ENCODE measurements at regions of chr9 and their contacts with region 1.

Region 1: GRCh38 chr9:121133149-121133816 is 58.5 kb downstream of the CNTRL start:
- DNase-seq: peak; percentile 77
- ATAC-seq: peak; percentile 99
- H3K4me3 ChIP-seq: peak overlapping the region in 1 of 3 experiments; percentile 36; a peak in 2 of 6 replicates
- H3K27ac ChIP-seq: peak overlapping the region; percentile 54
- H3K4me1 ChIP-seq: peaks cover 31% of the 10 kb centered on the region
- H3K27me3 ChIP-seq: no peaks in the 10 kb centered on the region
- CTCF ChIP-seq: no peak
- EP300 ChIP-seq: 0 out of 4 replicates have a peak, but pooled peaks of 1 of the 2 experiments have one; percentile 9
- POLR2A ChIP-seq: no peak
- RAD21 ChIP-seq: no peak

Region 2: DNA sequence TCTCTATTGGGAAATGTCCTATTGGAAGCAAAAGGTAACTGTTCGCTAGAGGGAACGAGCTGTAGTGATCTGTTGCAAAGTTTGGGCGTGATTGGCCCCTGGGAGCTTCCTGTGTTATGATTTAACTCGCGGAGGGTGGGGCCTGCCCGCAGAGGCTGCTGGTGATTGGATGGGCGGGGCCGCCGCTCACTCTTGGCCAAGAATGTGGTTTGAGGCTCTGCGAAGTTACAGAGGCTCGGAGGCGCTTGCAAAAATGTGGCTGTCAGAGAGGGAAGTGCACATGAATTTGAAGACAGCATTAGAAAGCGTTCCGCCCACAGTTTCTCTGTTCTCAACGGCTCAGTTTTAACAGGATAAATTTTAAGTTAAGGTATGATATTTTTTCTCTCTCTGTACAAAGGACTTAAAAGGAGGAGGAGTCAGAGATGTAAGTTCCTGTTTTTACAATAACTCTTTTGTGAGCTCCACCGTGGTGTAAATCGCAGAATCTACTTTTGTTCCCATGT is 11.6 kb before region 1 on chr9:
- CTCF ChIA-PET with region 1: no interaction called
- POLR2A ChIA-PET with region 1: interaction called, 26 read pairs
- in situ Hi-C with region 1: no loop called
- intact Hi-C with region 1: no loop called
- DNase-seq: peak; percentile 95
- ATAC-seq: peak; percentile 100
- H3K4me3 ChIP-seq: peak overlapping the region; percentile 50 to 70 (median 60)
- H3K27ac ChIP-seq: peak overlapping the region; percentile 62
- H3K4me1 ChIP-seq: peaks cover 11% of the 10 kb centered on the region
- H3K27me3 ChIP-seq: no peaks in the 10 kb centered on the region
- CTCF ChIP-seq: peak; percentile 19; the same call in 1 of the 2 replicates
- EP300 ChIP-seq: no peak; a peak in 1 of 4 replicates
- POLR2A ChIP-seq: peak; percentile 56 to 72; a peak in 3 of 4 replicates
- RAD21 ChIP-seq: no peak

Region 3: GRCh38 chr9:121196389-121196788 is 63.1 kb after region 1 on chr9:
- CTCF ChIA-PET with region 1: no interaction called
- POLR2A ChIA-PET with region 1: interaction called, 3 read pairs
- in situ Hi-C with region 1: no loop called
- intact Hi-C with region 1: loop called (anchors 5 kb)
- DNase-seq: no peak
- ATAC-seq: peak; percentile 71
- H3K4me3 ChIP-seq: peak overlapping the region in 1 of 3 experiments; percentile 10; a peak in 2 of 6 replicates
- H3K27ac ChIP-seq: peak overlapping the region; percentile 34
- H3K4me1 ChIP-seq: peaks cover 77% of the 10 kb centered on the region
- H3K27me3 ChIP-seq: no peaks in the 10 kb centered on the region; a peak in 1 of 5 replicates
- CTCF ChIP-seq: no peak
- EP300 ChIP-seq: no peak
- POLR2A ChIP-seq: no peak
- RAD21 ChIP-seq: no peak

Measured in HepG2 (cell line).